CD4-positive, alpha-beta T cell (primary cell): ENCODE measurements at regions of chr12 and their contacts with region 1.

Region 1: DNA sequence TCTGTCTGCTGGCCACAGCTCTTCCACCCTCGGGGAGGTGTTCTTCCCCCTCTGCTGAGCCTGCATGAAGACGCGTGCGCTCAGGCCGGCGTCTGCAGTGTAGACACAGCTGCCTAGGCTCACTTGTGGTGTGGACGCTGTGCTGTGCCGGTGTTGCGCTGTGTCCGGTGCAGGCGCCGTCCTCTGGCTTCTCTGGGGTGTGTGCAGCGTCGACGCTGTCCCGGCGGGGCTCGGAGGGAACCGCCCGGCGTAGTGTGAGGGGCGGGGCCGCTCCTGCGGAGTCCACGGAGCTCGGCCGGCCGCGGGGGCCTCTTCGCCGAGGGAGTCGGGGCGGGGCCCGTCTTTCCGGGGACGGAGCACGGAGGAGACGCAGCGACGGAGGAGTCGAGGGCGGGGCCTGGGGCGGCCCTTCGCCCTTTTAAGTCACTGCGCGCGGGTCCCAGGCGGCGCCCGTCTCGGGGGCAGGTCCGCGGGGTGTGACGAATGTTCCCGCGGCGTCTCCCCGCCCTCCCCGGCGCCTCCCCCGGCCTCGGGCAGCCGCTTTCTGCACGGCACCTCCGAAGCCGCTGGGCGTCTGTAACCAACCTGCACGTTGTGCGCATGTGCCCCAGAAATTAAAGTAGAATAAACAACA is 45.2 kb downstream of the NOC4L start:
- DNase-seq: peak; percentile 86 to 98 (median 94)
- ATAC-seq: peak; percentile 87
- H3K4me3 ChIP-seq: peak overlapping the region; percentile 91
- H3K4me3 Mint-ChIP-seq: peak overlapping the region; percentile 93
- H3K27ac ChIP-seq: peak overlapping the region; percentile 64 to 76
- H3K27ac Mint-ChIP-seq: peak overlapping the region; percentile 86
- H3K4me1 ChIP-seq: peaks cover 55% of the 10 kb centered on the region
- H3K4me1 Mint-ChIP-seq: peaks cover 45% of the 10 kb centered on the region
- H3K27me3 ChIP-seq: no peaks in the 10 kb centered on the region
- H3K27me3 Mint-ChIP-seq: no peaks in the 10 kb centered on the region
- CTCF ChIP-seq: no peak

Region 2: DNA sequence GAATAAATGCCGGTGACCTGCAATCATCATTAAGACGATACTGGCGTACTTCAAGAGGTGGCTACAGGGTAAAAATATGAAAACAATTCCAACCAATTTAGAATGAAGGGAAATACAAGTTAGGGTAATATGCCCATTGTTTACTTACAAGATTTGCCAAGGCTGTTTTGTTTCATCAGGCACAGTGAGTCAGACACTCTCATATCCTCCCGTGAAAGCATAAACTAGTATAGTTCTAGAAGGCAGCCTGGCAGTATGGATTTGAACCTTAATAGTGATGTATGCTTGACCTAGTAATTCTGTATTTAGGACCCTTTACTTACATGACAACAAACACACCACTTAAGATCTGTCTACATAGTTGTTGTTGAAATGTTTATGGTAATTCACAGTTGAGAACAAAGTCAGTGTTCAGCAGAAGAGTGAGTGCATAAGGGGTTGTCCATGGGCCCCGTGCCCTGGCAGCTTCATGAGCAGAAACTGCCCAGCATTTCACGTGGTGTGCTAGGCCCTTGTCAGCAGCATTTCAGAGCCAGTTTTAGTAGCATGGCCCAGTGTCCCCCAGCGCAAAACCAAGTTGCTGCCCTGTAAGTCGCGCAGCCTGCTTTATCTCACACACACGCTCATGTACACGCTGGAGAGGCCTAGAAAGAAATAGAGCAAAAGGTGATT is 159.0 kb before region 1 on chr12:
- CTCF ChIA-PET with region 1: no interaction called
- POLR2A ChIA-PET with region 1: no interaction called
- intact Hi-C with region 1: no loop called
- DNase-seq: no peak
- ATAC-seq: no peak
- H3K4me3 ChIP-seq: no peak overlapping the region
- H3K4me3 Mint-ChIP-seq: no peak overlapping the region
- H3K27ac ChIP-seq: no peak overlapping the region
- H3K27ac Mint-ChIP-seq: no peak overlapping the region
- H3K4me1 ChIP-seq: no peaks in the 10 kb centered on the region
- H3K4me1 Mint-ChIP-seq: no peaks in the 10 kb centered on the region
- H3K27me3 ChIP-seq: no peaks in the 10 kb centered on the region
- H3K27me3 Mint-ChIP-seq: no peaks in the 10 kb centered on the region
- CTCF ChIP-seq: no peak

Region 3: DNA sequence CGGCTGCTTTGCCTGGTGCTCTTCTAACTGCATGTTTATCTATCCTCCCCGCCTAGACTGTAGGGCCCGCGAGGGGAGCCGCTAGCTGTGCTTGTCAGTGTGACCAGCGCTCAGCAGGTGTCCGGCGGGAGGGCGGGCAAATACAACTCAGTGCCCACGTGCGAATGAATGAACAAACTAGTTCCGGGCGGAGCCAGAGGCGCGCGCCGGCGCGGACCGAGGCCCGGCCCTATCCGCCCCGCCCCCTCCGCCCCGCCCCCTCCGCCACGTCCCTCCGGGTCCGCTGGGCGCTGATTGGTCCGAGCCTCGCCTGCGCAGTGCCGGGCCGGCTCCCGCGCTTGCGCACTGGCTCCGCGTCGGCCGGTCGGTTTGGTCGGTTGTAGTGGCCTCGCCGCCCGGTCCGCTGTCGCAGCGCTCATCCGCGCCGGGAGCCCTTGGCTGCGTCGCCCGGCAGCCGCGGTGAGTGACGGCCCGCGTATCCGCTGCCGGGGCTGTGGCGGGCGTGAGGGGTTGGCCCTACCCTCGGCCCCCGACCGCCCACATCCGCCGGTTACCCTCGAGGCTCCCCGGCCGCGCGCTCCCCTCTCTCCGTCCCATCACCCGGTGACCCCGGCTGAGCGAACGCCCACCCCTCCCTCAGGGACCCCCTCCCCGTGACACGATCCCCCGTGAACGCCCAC is 105.4 kb before region 1 on chr12:
- CTCF ChIA-PET with region 1: no interaction called
- POLR2A ChIA-PET with region 1: no interaction called
- intact Hi-C with region 1: loop called in 1 of 2 experiments (anchors 5 kb)
- DNase-seq: peak; percentile 74 to 95 (median 84)
- ATAC-seq: peak; percentile 94
- H3K4me3 ChIP-seq: peak overlapping the region; percentile 75
- H3K4me3 Mint-ChIP-seq: peak overlapping the region; percentile 86
- H3K27ac ChIP-seq: peak overlapping the region in 1 of 2 donors; percentile 88
- H3K27ac Mint-ChIP-seq: peak overlapping the region; percentile 24
- H3K4me1 ChIP-seq: peaks cover 23% of the 10 kb centered on the region
- H3K4me1 Mint-ChIP-seq: peaks cover 27% of the 10 kb centered on the region
- H3K27me3 ChIP-seq: no peaks in the 10 kb centered on the region
- H3K27me3 Mint-ChIP-seq: no peaks in the 10 kb centered on the region
- CTCF ChIP-seq: no peak

Region 4: GRCh38 chr12:132144115-132144812 is 45.2 kb before region 1 on chr12 and contains the starts of genes DDX51 and NOC4L:
- CTCF ChIA-PET with region 1: no interaction called
- POLR2A ChIA-PET with region 1: interaction called, 8 read pairs
- intact Hi-C with region 1: loop called in 1 of 2 experiments (anchors 1 kb)
- DNase-seq: peak; percentile 92 to 99 (median 95)
- ATAC-seq: peak; percentile 90
- H3K4me3 ChIP-seq: peak within 1 kb of the TSS; percentile 72
- H3K4me3 Mint-ChIP-seq: peak within 1 kb of the TSS; percentile 99
- H3K27ac ChIP-seq: peak within 1 kb of the TSS; percentile 60 to 74
- H3K27ac Mint-ChIP-seq: peak within 1 kb of the TSS; percentile 98
- H3K4me1 ChIP-seq: peaks cover 44% of the 10 kb centered on the region
- H3K4me1 Mint-ChIP-seq: peaks cover 25% of the 10 kb centered on the region
- H3K27me3 ChIP-seq: no peaks in the 10 kb centered on the region
- H3K27me3 Mint-ChIP-seq: no peaks in the 10 kb centered on the region
- CTCF ChIP-seq: no peak
- total RNA-seq, gene DDX51: 58.0 to 59.3 TPM
- total RNA-seq, gene NOC4L: 21.8 to 22.3 TPM

Region 5: GRCh38 chr12:132153501-132154340 is 35.8 kb before region 1 on chr12:
- CTCF ChIA-PET with region 1: interaction called, 8 read pairs
- POLR2A ChIA-PET with region 1: interaction called, 12 read pairs
- intact Hi-C with region 1: loop called in 1 of 2 experiments (anchors 5 kb)
- DNase-seq: peak; percentile 54 to 90 (median 68)
- ATAC-seq: peak; percentile 95
- H3K4me3 ChIP-seq: peak overlapping the region; percentile 32
- H3K4me3 Mint-ChIP-seq: peak overlapping the region; percentile 38
- H3K27ac ChIP-seq: no peak overlapping the region
- H3K27ac Mint-ChIP-seq: no peak overlapping the region
- H3K4me1 ChIP-seq: peaks cover 9% of the 10 kb centered on the region
- H3K4me1 Mint-ChIP-seq: no peaks in the 10 kb centered on the region
- H3K27me3 ChIP-seq: no peaks in the 10 kb centered on the region
- H3K27me3 Mint-ChIP-seq: no peaks in the 10 kb centered on the region
- CTCF ChIP-seq: peak; percentile 79

Region 6: DNA sequence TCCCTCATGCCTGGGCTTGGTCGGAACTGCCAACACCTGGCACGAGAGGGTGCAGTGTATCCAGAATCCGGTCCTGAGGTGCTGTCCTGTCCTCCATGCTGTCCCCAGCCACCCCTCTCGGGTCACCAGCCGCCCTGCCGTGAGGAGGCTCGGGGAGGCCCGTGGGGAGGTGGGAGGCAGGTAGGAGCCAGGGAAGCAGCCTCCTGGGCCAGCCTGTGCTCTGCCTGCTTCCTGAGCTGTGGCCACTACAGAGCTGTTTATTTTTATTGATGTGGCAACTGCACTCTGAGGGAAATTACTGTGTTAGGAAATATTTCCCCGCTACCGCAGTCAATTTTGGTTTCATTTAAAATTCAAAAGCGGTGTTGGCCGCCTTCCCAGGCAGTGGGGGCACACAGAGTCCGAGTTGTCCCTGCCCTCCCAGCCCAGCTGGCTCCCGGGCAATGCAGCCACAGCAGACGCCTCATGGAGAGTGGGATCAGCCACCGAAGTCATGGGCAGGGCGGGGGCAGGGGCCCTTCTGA is 26.9 kb before region 1 on chr12:
- CTCF ChIA-PET with region 1: no interaction called
- POLR2A ChIA-PET with region 1: interaction called, 12 read pairs
- intact Hi-C with region 1: loop called in 1 of 2 experiments (anchors 2 kb)
- DNase-seq: peak in 4 of 14 experiments; percentile 32 to 77 (median 55)
- ATAC-seq: peak; percentile 66
- H3K4me3 ChIP-seq: peak overlapping the region; percentile 38
- H3K4me3 Mint-ChIP-seq: no peak overlapping the region
- H3K27ac ChIP-seq: no peak overlapping the region
- H3K27ac Mint-ChIP-seq: no peak overlapping the region
- H3K4me1 ChIP-seq: peaks cover 25% of the 10 kb centered on the region
- H3K4me1 Mint-ChIP-seq: peaks cover 6% of the 10 kb centered on the region
- H3K27me3 ChIP-seq: no peaks in the 10 kb centered on the region
- H3K27me3 Mint-ChIP-seq: no peaks in the 10 kb centered on the region
- CTCF ChIP-seq: no peak

Region 7: DNA sequence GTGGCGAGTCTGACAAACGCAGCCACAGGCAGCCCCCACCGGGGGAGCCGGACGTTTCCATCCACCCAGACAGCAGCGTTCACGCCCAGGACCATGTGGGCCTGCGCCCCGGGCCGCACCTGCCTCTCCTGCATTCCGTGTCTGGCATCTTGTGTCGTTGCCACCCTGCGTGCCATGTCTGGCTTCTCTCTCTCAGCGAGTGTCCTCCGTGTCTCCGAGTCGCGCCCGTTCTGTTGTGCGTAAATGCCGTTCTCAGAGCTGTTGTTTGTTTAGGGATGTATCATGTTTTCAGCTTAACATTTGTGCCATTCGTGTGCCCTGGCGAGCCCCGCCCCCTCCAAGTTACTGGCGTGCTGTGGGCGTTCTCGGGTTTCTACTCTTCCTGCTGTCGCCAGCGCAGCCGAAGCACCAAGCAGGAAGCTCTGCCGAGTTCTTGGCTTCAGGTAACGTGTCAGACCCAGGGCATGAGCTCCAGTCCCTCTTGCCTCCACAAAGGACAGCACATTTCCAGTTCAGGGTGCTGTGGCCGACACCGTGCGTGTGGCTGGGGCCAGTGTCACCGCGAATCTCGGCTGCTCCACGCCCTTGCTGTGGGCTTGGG is 10.6 kb before region 1 on chr12:
- CTCF ChIA-PET with region 1: no interaction called
- POLR2A ChIA-PET with region 1: interaction called, 35 read pairs
- intact Hi-C with region 1: no loop called
- DNase-seq: peak; percentile 37 to 80 (median 58)
- ATAC-seq: peak; percentile 87
- H3K4me3 ChIP-seq: peak overlapping the region; percentile 40
- H3K4me3 Mint-ChIP-seq: peak overlapping the region; percentile 88
- H3K27ac ChIP-seq: no peak overlapping the region
- H3K27ac Mint-ChIP-seq: peak overlapping the region; percentile 94
- H3K4me1 ChIP-seq: peaks cover 40% of the 10 kb centered on the region
- H3K4me1 Mint-ChIP-seq: peaks cover 34% of the 10 kb centered on the region
- H3K27me3 ChIP-seq: peaks cover 0 to 3% of the 10 kb centered on the region in 2 experiments
- H3K27me3 Mint-ChIP-seq: peaks cover 5% of the 10 kb centered on the region
- CTCF ChIP-seq: no peak

Region 8: DNA sequence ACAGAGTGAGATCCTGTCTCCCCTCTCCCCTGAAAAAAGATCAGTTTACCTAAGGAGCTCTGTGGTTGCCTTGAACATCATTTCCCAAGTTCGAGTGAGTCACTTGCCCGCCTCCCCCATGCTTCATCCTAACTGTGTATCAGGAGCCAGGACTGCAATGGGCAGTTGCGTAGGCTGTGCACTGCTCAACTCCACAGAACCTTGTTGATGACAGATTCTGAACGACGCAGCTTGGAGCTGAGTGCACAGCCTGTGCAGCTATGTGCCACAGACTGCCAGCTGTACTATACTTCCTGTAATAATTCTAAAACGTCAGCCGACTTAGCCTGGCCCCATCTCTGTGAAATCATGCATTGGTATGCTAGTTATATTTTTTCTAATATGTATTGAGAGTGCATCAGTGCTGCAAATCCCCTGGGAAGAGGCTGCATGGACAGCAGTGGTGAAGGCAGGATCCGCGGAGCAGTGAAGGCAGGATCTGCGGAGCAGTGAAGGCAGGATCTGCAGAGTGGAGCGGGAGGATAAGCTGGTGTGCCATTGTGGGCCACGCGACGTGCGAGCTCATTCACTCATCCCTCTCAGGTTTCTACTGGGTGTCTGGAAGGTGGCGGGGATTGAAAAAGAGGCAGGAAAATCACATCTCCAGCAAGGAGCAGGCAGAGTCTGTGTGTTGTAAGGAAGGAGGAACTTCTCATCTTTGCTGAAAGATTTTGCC is 59.1 kb after region 1 on chr12:
- CTCF ChIA-PET with region 1: no interaction called
- POLR2A ChIA-PET with region 1: no interaction called
- intact Hi-C with region 1: no loop called
- DNase-seq: no peak
- ATAC-seq: no peak
- H3K4me3 ChIP-seq: no peak overlapping the region
- H3K4me3 Mint-ChIP-seq: no peak overlapping the region
- H3K27ac ChIP-seq: no peak overlapping the region
- H3K27ac Mint-ChIP-seq: no peak overlapping the region
- H3K4me1 ChIP-seq: no peaks in the 10 kb centered on the region
- H3K4me1 Mint-ChIP-seq: peaks cover 4% of the 10 kb centered on the region
- H3K27me3 ChIP-seq: no peaks in the 10 kb centered on the region
- H3K27me3 Mint-ChIP-seq: peaks cover 11% of the 10 kb centered on the region
- CTCF ChIP-seq: no peak

Region 9: GRCh38 chr12:132489602-132490239 is 300.2 kb after region 1 on chr12 and contains the start of gene FBRSL1:
- CTCF ChIA-PET with region 1: no interaction called
- POLR2A ChIA-PET with region 1: no interaction called
- intact Hi-C with region 1: loop called in 1 of 2 experiments (anchors 5 kb)
- DNase-seq: peak; percentile 92 to 98 (median 95)
- ATAC-seq: peak; percentile 76
- H3K4me3 ChIP-seq: peak within 1 kb of the TSS; percentile 80
- H3K4me3 Mint-ChIP-seq: peak within 1 kb of the TSS; percentile 91
- H3K27ac ChIP-seq: peak within 1 kb of the TSS; percentile 83 to 92
- H3K27ac Mint-ChIP-seq: peak within 1 kb of the TSS; percentile 97
- H3K4me1 ChIP-seq: peaks cover 70% of the 10 kb centered on the region
- H3K4me1 Mint-ChIP-seq: peaks cover 71% of the 10 kb centered on the region
- H3K27me3 ChIP-seq: no peaks in the 10 kb centered on the region
- H3K27me3 Mint-ChIP-seq: no peaks in the 10 kb centered on the region
- CTCF ChIP-seq: no peak
- total RNA-seq, gene FBRSL1: 75.8 to 80.7 TPM